ENCODE measurements at regions of chr1 and their contacts with region 1.

Region 1: DNA sequence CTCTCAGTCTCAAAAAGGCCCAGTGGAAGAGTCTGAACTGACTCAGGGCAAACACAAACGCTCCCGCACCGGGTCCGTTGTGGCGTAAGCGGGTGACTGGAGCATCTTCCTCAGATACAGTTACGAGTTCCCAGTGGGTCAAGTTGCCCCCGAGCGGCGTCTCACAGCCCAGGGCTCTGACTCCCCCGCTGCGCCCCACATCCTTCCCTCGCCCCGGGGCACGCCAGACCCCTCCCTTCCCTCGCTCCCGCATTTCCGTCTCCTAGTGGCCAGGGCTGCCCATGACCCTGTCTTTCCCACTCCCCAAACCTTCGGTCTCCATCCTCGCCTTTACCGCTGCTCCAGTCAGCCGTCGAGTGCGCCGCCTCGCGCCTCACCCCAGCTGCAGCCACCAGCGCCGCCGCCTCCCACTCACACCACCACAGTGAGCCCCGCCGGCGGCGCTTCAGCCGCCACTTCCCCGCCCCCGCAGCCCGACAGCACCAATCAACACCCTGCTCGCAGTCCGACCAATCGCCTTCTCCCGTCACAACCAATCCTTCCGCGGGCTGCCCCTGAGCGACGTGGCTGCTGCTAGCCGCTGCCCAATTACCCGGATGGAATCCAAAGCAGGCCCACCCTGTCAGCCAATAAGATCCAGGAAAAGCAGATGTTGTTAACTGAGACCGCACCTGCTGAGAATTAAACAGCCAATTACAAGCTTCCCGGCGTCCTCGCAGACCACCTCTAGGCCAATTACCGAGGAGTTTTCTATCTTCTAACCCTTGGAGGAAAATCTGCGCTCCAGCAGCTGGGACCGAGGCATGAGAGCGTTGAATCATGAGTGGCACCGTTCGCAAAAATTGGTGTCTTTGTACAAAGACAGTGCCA is at the start of gene TDRKH:
- H3K4me3 ChIP-seq: peak within 1 kb of the TSS; percentile 51
- H3K27ac ChIP-seq: peak within 1 kb of the TSS; percentile 12
- H3K4me1 ChIP-seq: no peaks in the 10 kb centered on the region
- CTCF ChIP-seq: peak; percentile 100

Region 2: DNA sequence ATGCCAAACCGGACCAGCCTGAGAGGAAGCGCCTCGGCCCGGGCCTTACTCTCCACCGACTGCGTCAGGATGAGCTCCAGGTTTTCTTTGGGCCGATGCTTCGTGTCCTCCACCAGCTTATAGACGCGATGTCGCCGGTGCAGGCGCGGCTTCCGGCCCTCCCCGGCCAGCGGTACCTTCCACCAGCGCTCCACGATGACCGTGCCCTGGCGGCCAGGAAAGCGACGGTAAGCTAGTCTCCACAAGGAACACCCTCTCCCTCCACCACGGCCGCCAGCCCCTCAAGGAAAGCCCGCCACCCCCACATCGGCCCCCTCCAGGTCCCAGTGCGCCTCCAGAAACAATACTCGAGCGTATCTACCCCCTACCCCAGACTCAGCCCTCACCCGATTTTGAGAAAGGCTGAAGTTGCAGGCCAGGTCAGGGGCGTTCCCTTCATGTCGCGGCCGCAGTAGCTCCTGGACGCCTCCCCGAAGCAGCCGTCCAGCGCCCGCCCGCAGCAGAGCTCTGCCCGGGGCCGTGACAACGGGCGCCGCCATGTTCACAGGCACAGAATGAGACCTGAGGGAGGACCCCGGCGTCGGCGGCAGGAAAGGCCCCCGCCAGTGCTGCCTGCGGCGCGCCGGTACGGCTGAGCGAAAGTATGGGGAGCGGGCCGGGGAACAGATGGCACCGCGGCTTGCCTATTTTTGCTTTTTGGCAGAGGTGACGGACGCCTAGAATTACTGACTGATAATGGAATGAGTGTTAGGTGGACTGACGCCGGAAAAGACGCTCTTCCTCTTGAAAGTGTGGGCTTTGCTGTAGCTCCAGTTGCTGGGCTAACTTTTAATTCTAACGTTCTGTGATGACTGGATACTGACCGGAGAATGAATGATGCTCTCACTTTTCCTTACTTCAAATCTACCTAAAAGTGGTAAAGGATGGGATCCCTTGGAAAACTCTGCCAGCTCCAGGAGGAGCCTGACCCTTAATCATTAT is 27.1 kb before region 1 on chr1 and contains the start of gene MRPL9:
- CTCF ChIA-PET with region 1: no interaction called
- POLR2A ChIA-PET with region 1: interaction called, 11 read pairs
- H3K4me3 ChIP-seq: peak within 1 kb of the TSS; percentile 93
- H3K27ac ChIP-seq: peak within 1 kb of the TSS; percentile 65
- H3K4me1 ChIP-seq: no peaks in the 10 kb centered on the region
- CTCF ChIP-seq: no peak